ENCODE measurements at regions of chrX and their contacts with region 1.

Region 1: GRCh38 chrX:118839334-118839958 is 15.8 kb downstream of the ZCCHC12 start:
- DNase-seq: peak; percentile 91
- ATAC-seq: peak; percentile 95
- H3K4me3 Mint-ChIP-seq: peak overlapping the region; percentile 62
- H3K27ac Mint-ChIP-seq: no peak overlapping the region
- H3K4me1 Mint-ChIP-seq: peaks cover 9% of the 10 kb centered on the region
- H3K27me3 Mint-ChIP-seq: peaks cover 38% of the 10 kb centered on the region
- CTCF ChIP-seq: peak; percentile 54; the same call in 1 of the 2 replicates

Region 2: DNA sequence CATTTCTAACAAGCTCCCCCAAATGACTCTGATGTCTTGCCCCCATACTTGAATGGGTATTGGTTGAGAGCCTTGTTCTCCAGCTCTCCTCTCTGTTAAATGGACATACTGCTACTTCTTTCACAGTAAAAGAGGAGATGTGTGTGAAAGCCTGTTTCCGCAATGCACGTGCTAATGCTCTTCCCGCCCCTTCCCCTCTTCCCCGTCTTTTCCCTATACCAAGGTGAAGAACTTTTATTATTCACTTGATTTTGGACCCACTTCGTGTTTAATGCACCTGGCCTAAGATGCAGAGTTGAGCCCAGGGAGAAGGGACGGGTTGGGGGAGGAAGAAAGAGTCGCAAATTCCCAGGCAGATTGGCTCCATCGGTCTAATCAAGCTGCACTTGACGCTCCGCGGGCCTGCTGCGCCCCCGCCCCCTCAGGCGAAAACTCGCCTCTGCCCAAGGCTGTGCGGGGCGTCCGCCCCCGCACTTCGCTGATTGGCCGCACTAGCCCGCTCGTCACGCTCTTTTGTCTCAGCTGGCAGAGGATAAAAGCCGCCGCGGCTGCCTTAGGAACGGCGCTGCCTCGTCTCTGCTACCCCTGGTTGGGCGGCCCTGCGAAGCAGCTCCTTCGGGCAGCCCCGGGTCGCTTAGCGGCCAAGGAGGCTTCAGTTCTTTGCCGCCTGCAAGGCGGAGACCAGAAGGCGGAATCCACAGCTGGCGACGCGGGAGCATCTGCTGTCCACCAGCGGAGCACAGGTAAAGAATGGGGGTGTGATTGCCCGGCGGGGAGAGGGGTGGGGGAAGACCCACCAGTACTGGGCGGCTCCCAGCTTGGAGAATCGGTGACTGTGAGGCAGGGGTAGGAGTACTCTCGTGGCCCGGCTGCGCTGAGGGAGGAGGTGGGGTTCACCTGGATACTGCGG is 15.9 kb before region 1 on chrX and contains the start of gene ZCCHC12:
- CTCF ChIA-PET with region 1: interaction called, 34 read pairs
- POLR2A ChIA-PET with region 1: interaction called, 3 read pairs
- DNase-seq: peak; percentile 81
- ATAC-seq: peak; percentile 94
- H3K4me3 Mint-ChIP-seq: peak within 1 kb of the TSS; percentile 76
- H3K27ac Mint-ChIP-seq: no peak within 1 kb of the TSS
- H3K4me1 Mint-ChIP-seq: peaks cover 25% of the 10 kb centered on the region
- H3K27me3 Mint-ChIP-seq: peaks cover 86% of the 10 kb centered on the region
- CTCF ChIP-seq: no peak
- total RNA-seq, gene ZCCHC12: 0.87 to 0.94 TPM (median 0.92 TPM) in 3 replicates

Region 3: DNA sequence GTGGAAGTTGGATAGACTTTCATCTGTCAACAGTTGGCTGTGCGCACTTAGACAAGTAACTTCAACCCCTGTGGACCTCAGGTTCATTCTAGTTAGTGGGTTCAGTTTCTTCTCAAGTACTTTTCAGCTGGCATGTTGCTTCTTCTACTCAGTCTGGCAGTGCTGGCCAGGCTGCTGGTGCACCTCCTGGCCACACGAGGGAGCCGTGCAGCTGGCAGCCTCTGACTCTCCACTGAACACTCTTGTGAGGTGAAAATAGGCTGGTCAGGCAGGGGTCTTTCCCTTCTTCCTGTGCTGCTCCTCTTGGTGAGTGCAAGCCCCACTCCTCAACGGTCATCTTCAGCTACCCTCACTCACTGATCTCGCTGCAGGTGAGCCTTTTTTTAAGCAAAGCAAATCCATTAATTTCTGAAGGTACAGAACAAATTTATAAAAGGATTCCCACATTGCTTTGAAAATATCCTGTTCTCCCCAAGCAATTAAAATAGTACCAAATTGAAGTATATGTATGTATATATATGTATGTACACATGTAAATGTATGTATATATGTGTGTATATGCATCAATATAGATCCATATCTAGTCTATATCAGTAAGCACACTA is 165.6 kb after region 1 on chrX:
- CTCF ChIA-PET with region 1: interaction called, 14 read pairs
- POLR2A ChIA-PET with region 1: no interaction called
- DNase-seq: peak; percentile 63
- ATAC-seq: peak; percentile 96
- H3K4me3 Mint-ChIP-seq: no peak overlapping the region
- H3K27ac Mint-ChIP-seq: no peak overlapping the region
- H3K4me1 Mint-ChIP-seq: no peaks in the 10 kb centered on the region
- H3K27me3 Mint-ChIP-seq: peaks cover 36% of the 10 kb centered on the region
- CTCF ChIP-seq: peak; percentile 46; the same call in 1 of the 2 replicates

Region 4: GRCh38 chrX:119067023-119067739 is 227.7 kb after region 1 on chrX:
- CTCF ChIA-PET with region 1: interaction called, 12 read pairs
- POLR2A ChIA-PET with region 1: no interaction called
- DNase-seq: peak; percentile 50
- ATAC-seq: peak; percentile 83
- H3K4me3 Mint-ChIP-seq: no peak overlapping the region
- H3K27ac Mint-ChIP-seq: no peak overlapping the region
- H3K4me1 Mint-ChIP-seq: peaks cover 6% of the 10 kb centered on the region
- H3K27me3 Mint-ChIP-seq: peaks cover 4% of the 10 kb centered on the region; the same call in 1 of the 2 replicates
- CTCF ChIP-seq: peak; percentile 18; the same call in 1 of the 2 replicates

Measured in WTC11 (cell line).